HCT116 (cell line): ENCODE measurements at regions of chr10 and their contacts with region 1.

Region 1: DNA sequence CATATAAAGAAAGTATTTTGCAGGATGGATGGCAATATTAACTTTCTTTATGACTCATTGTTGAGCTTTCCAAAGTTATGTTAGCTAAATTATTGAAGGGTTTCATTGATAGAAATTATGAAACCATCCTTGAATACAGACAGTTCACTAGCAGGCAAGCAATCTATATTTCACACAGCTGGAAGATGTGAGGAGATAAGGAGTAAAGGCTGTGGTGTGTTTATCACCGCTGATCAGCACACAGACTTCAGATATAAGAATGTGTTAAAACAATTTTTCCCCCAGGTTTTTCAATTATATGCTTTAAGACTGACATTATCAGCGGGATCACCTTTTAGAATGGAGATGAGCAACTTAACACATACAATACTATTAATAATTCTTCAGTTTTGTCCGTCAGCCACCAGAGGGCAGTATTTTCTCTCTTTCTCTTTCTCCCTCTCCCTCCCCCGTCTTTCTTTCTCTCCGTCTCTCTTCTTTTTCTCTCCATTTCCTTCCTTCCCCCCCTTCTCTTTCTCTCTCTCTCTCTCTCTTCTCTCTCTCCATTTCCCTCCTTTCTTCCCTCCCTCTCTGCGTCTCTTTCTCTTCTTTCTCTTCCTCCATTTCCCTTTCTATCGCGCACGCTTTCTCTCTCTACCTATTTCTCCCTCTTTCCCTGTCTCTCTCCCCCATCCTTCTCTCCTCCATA is 62.9 kb upstream of the FAM171A1 start:
- DNase-seq: peak; percentile 38
- ATAC-seq: peak; percentile 90
- H3K4me3 ChIP-seq: peak overlapping the region; percentile 29 to 37
- H3K27ac ChIP-seq: no peak overlapping the region
- H3K4me1 ChIP-seq: 0 out of 4 replicates have a peak, but pooled peaks cover 0 to 2% of the 10 kb centered on the region in 2 experiments
- H3K27me3 ChIP-seq: no peaks in the 10 kb centered on the region
- CTCF ChIP-seq: peak; percentile 46 to 69 (median 50); a peak in 4 of 6 replicates
- POLR2A ChIP-seq: no peak
- RAD21 ChIP-seq: peak; percentile 60

Region 2: GRCh38 chr10:14975670-14976273 is 458.2 kb before region 1 on chr10:
- CTCF ChIA-PET with region 1: no interaction called
- POLR2A ChIA-PET with region 1: no interaction called
- RAD21 ChIA-PET with region 1: no interaction called
- intact Hi-C with region 1: no loop called
- DNase-seq: peak; percentile 18
- ATAC-seq: peak; percentile 76
- H3K4me3 ChIP-seq: peak overlapping the region; percentile 8 to 45
- H3K27ac ChIP-seq: no peak overlapping the region
- H3K4me1 ChIP-seq: no peaks in the 10 kb centered on the region
- H3K27me3 ChIP-seq: no peaks in the 10 kb centered on the region
- CTCF ChIP-seq: peak; percentile 30 to 34 (median 31); a peak in 3 of 6 replicates
- POLR2A ChIP-seq: no peak
- RAD21 ChIP-seq: peak; percentile 37; the same call in 1 of the 2 replicates

Region 3: DNA sequence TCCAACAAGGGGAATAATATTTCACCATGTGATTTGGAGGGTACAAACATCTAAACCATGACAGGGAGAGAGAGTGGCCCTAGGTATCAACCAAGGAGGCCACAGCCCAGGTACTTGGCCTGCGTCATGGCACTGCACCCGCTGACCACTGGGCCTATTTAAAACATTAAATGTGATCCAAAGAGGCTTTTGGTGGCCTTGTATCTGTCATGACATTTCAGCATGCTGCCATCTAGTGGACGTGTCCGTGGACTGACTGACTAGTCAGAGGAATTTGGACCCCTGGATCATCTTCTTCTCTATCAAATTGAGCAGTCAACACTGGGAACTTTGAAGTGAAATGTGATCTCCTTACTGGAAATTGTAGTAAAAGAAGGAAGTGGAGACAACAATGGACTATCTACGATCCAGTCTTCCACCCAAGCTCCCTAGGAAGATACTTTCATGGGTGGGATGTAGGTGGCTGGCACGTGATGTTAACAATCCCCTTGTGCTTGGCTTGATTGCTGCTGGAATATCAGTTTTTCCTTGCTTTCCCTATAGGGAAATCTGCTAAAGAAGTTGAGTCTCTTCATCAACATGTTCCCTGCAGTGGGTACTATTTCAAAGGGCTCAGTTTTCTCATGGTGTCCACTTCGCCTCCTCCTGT is 310.3 kb after region 1 on chr10:
- CTCF ChIA-PET with region 1: no interaction called
- POLR2A ChIA-PET with region 1: no interaction called
- RAD21 ChIA-PET with region 1: interaction called in 1 of 2 experiments, 5 read pairs
- intact Hi-C with region 1: loop called (anchors 2 kb)
- DNase-seq: peak; percentile 66
- ATAC-seq: peak; percentile 91
- H3K4me3 ChIP-seq: no peak overlapping the region
- H3K27ac ChIP-seq: no peak overlapping the region
- H3K4me1 ChIP-seq: peaks cover 0 to 4% of the 10 kb centered on the region in 2 experiments; a peak in 1 of 4 replicates
- H3K27me3 ChIP-seq: no peaks in the 10 kb centered on the region; the same call in 1 of the 2 replicates
- CTCF ChIP-seq: peak; percentile 40 to 86 (median 72); a peak in 5 of 6 replicates
- POLR2A ChIP-seq: no peak
- RAD21 ChIP-seq: peak; percentile 54